ENCODE measurements at regions of chr2 and their contacts with region 1.

Region 1: DNA sequence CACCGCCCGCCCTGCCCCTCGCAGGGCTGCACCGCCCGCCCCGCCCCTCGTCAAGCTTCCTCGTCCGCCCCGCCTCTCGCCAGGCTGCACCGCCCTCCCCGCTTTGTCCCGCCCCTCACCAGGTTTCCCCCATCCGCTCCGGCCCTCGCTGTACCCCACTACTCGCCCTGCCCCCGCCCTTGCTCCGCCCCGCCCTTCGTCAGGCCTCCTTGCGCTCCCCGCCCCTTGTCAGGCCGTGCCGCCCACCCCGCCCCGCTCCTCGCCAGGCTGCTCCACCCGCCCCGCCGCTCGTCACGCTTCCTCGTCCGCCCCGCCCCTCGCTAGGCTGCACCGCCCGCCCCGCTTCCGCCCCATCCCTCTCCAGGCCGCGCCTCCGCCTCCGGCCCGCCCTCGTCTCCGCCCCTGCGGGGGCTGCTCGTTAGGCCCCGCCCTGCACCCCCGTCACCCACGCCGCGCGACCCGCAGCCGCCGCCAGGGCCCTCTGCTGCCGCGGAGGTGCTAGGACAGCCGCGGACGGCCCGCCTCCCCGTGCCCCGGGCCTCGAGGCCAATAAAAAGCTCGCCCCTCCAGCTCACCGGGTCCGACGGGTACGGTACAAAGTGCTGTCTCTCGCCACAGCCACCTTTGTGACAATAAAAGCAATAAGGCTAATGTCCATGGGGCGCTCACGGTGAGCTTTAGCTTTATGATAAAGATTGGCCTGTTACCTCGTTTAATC is 574 bp upstream of the DNPEP start:
- DNase-seq: peak; percentile 95
- ATAC-seq: peak; percentile 67
- H3K4me3 ChIP-seq: peak overlapping the region; percentile 66
- H3K27ac ChIP-seq: peak overlapping the region; percentile 5; the same call in 1 of the 2 replicates
- H3K4me1 ChIP-seq: peaks cover 15% of the 10 kb centered on the region
- H3K27me3 ChIP-seq: no peaks in the 10 kb centered on the region
- CTCF ChIP-seq: peak; percentile 64

Region 2: GRCh38 chr2:219253753-219254590 is 134.3 kb before region 1 on chr2 and contains the start of gene TUBA4A:
- CTCF ChIA-PET with region 1: no interaction called
- POLR2A ChIA-PET with region 1: interaction called, 3 read pairs
- intact Hi-C with region 1: loop called (anchors 1 kb)
- DNase-seq: peak; percentile 90
- ATAC-seq: peak; percentile 58
- H3K4me3 ChIP-seq: peak within 1 kb of the TSS; percentile 74
- H3K27ac ChIP-seq: peak within 1 kb of the TSS; percentile 33
- H3K4me1 ChIP-seq: peaks cover 38% of the 10 kb centered on the region
- H3K27me3 ChIP-seq: no peaks in the 10 kb centered on the region
- CTCF ChIP-seq: no peak
- total RNA-seq, gene TUBA4A: 75.4 and 87.9 TPM in 2 replicates

Region 3: DNA sequence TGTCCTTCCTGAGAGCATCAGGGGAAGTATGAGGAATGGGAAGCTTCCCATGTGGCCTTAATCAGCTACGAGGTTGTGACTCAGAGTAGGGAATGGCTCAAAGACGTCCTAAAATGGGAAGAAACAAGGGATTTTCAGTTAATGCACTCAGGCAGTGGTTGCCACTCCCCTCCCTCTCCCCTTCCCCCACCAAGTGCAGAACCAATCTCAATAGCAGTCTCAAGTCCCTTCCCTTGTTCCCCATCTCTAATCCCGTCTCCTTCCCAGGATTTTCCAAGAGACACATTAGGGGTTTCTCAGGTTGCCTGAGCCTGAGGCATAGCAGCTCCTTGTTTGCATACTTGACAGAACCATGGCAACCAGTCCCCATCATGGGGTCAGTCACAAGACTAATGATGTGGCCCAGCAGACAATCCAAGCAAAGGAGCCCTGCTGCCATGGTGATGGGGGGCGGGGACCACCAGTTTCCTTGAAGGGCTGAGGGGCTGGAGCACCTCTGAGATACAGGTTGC is 37.5 kb before region 1 on chr2:
- CTCF ChIA-PET with region 1: no interaction called
- POLR2A ChIA-PET with region 1: interaction called, 12 read pairs
- intact Hi-C with region 1: no loop called
- DNase-seq: no peak
- ATAC-seq: no peak
- H3K4me3 ChIP-seq: no peak overlapping the region
- H3K27ac ChIP-seq: no peak overlapping the region
- H3K4me1 ChIP-seq: no peaks in the 10 kb centered on the region
- H3K27me3 ChIP-seq: no peaks in the 10 kb centered on the region
- CTCF ChIP-seq: no peak

Region 4: GRCh38 chr2:219498280-219499057 is 110.2 kb after region 1 on chr2 and contains the start of gene GMPPA:
- CTCF ChIA-PET with region 1: no interaction called
- POLR2A ChIA-PET with region 1: interaction called, 14 read pairs
- intact Hi-C with region 1: loop called (anchors 5 kb)
- DNase-seq: peak; percentile 99
- ATAC-seq: peak; percentile 83
- H3K4me3 ChIP-seq: peak within 1 kb of the TSS; percentile 85
- H3K27ac ChIP-seq: peak within 1 kb of the TSS; percentile 68
- H3K4me1 ChIP-seq: peaks cover 21% of the 10 kb centered on the region
- H3K27me3 ChIP-seq: no peaks in the 10 kb centered on the region
- CTCF ChIP-seq: no peak
- total RNA-seq, gene GMPPA: 78.1 and 85.7 TPM in 2 replicates

Region 5: DNA sequence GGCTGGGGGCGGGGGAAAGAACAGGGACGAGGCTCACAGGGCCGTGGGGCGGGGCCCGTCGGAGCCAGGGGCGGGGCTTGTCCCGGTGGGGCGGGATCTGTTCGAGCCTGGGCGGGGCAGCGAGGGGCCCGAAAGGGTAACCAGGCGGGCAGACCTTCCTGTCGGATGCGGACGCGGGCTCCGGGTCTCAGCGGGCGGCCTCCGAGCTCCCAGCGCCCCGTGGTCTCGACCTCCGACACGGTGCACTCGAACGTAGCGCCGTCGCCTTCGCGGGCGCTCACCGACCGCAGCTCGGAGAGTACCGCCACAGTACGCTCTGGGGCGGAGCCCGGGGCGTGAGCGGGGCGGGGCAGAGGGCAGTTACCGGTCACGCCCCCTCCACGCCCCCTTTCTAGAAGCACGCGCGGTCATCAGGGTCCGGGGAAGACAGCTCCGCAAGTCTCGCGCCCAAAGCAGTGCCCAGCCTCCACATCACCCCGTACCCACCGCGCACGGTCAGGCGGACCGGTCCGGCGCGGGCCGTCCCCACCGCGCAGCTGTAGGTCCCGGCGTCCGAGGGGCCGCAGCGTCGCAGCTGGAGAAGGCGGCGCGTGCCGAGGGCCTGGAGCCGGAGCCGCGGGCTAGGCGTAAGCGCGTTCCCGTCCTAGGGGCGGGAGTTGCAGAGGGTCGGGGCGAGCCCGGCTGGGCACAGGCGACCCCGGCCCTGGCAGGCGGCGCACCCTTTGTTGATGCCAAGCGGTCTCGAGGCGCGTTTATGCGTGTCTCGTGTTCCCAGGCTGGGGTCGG is 164.3 kb after region 1 on chr2:
- CTCF ChIA-PET with region 1: no interaction called
- POLR2A ChIA-PET with region 1: no interaction called
- intact Hi-C with region 1: no loop called
- DNase-seq: peak; percentile 83
- ATAC-seq: peak; percentile 88
- H3K4me3 ChIP-seq: peak overlapping the region; percentile 72
- H3K27ac ChIP-seq: no peak overlapping the region
- H3K4me1 ChIP-seq: peaks cover 9% of the 10 kb centered on the region
- H3K27me3 ChIP-seq: no peaks in the 10 kb centered on the region
- CTCF ChIP-seq: no peak

Region 6: DNA sequence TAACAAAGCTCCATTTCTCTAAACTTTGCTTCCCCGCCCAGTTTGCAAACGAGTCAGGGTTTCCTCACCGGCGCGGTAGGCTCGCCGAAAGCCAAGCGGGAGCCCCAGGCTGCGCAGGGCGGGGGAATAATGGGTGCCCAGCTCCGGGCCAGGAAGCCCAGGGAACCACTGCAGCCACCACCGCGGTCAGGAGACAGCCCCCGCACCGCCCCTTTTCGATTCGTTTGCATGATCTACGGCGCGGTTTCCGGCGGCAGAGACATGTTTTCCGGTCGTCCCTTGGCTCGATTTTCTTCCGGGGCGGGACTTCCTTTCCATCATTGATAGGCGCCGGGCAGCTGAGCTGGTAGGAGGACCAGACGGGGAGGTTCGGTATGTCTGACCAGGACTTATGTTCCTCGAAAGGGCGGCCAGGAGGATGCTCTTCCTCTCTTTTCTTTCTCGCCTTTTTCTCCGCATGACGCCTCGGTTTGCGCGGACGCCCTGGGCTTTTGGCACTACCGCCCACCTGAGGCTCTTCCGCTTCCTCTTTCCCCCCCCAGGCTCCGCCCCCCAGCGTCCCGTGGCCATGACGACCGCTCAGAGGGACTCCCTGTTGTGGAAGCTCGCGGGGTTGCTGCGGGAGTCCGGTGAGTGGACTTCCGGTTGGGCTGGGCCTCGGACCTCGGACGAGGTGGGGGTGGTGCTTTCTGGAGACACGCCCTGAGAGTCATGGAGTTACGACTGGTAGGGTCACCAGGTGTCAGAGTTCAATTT is 209.4 kb after region 1 on chr2 and contains the start of gene STK11IP:
- CTCF ChIA-PET with region 1: no interaction called
- POLR2A ChIA-PET with region 1: interaction called, 11 read pairs
- intact Hi-C with region 1: no loop called
- DNase-seq: peak; percentile 96
- ATAC-seq: peak; percentile 94
- H3K4me3 ChIP-seq: peak within 1 kb of the TSS; percentile 82
- H3K27ac ChIP-seq: peak within 1 kb of the TSS; percentile 75
- H3K4me1 ChIP-seq: peaks cover 15% of the 10 kb centered on the region
- H3K27me3 ChIP-seq: no peaks in the 10 kb centered on the region
- CTCF ChIP-seq: no peak
- total RNA-seq, gene STK11IP: 17.7 and 26.4 TPM in 2 replicates